Caco-2 (cell line): ENCODE measurements at regions of chr1 and their contacts with region 1.

Region 1: DNA sequence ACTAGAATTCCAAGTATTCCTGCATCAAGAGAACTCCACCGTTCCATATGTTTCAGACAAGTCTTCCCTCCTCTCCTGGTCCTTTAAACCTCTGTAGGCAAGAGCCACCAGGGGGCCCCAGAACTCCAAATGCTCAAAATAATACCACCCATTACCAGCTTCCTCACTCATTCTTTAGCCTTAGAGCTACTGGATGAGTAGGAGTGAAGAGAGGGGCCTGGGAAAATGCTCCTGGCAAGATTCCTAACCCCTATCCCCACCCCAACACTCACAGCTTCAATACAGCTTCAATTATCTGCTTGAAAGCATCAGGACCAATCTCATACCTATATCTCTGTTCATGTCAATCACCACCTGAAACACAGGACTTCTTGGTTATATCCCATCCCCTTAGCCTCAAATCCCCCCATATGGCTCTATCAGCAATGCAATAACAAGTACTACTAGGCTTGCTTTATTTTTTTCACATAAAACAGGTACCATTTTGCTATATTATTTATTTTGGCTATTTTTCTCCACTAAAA is 9.7 kb downstream of the TOR1AIP2 start:
- DNase-seq: peak; percentile 61 to 69
- H3K4me3 ChIP-seq: no peak overlapping the region
- H3K4me3 Mint-ChIP-seq: no peak overlapping the region
- H3K27ac Mint-ChIP-seq: no peak overlapping the region
- H3K4me1 ChIP-seq: peaks cover 4% of the 10 kb centered on the region
- H3K4me1 Mint-ChIP-seq: peaks cover 11% of the 10 kb centered on the region
- H3K27me3 ChIP-seq: no peaks in the 10 kb centered on the region
- H3K27me3 Mint-ChIP-seq: no peaks in the 10 kb centered on the region
- CTCF ChIP-seq: peak; percentile 77 to 83

Region 2: GRCh38 chr1:179807731-179808485 is 60.0 kb before region 1 on chr1:
- CTCF ChIA-PET with region 1: no interaction called
- POLR2A ChIA-PET with region 1: no interaction called
- intact Hi-C with region 1: no loop called
- DNase-seq: peak; percentile 57 to 73
- H3K4me3 ChIP-seq: no peak overlapping the region
- H3K4me3 Mint-ChIP-seq: no peak overlapping the region
- H3K27ac Mint-ChIP-seq: peak overlapping the region; percentile 58
- H3K4me1 ChIP-seq: peaks cover 34% of the 10 kb centered on the region
- H3K4me1 Mint-ChIP-seq: peaks cover 10% of the 10 kb centered on the region
- H3K27me3 ChIP-seq: no peaks in the 10 kb centered on the region
- H3K27me3 Mint-ChIP-seq: peaks cover 14% of the 10 kb centered on the region
- CTCF ChIP-seq: no peak

Region 3: DNA sequence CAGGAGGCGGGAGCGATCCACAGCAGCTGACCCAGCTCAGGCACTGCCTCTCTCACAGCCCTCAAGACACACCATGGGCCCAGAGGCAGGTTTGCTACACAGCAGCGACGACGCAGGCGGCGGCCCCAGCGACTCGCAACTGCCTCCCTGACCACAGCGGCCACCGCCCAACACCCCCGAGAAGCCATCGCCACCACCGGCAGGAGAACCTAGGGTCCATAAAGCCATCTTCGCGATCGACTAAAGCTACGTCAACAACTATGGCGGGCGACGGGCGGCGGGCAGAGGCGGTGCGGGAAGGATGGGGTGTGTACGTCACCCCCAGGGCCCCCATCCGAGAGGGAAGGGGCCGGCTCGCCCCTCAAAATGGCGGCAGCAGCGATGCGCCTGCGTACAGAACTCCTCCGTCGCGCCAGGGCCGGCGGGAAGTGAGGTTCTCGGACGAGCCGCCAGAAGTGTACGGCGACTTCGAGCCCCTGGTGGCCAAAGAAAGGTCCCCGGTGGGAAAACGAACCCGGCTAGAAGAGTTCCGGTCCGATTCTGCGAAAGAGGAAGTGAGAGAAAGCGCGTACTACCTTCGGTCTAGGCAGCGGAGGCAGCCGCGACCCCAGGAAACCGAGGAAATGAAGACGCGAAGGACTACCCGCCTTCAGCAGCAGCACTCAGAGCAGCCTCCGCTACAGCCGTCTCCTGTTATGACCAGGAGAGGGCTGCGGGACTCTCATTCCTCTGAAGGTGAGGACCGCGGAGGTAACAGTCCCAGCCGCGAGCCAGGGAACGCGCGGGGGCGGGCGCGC is 14.6 kb after region 1 on chr1 and contains the start of gene TOR1AIP1:
- CTCF ChIA-PET with region 1: interaction called, 12 read pairs
- POLR2A ChIA-PET with region 1: no interaction called
- intact Hi-C with region 1: no loop called
- DNase-seq: peak; percentile 97
- H3K4me3 ChIP-seq: peak within 1 kb of the TSS; percentile 65
- H3K4me3 Mint-ChIP-seq: peak within 1 kb of the TSS; percentile 95
- H3K27ac Mint-ChIP-seq: peak within 1 kb of the TSS; percentile 100
- H3K4me1 ChIP-seq: peaks cover 10% of the 10 kb centered on the region
- H3K4me1 Mint-ChIP-seq: peaks cover 19% of the 10 kb centered on the region
- H3K27me3 ChIP-seq: no peaks in the 10 kb centered on the region
- H3K27me3 Mint-ChIP-seq: no peaks in the 10 kb centered on the region
- CTCF ChIP-seq: peak; percentile 17 to 60
- total RNA-seq, gene TOR1AIP1: 25.4 and 30.3 TPM in 2 replicates

Region 4: GRCh38 chr1:179954493-179955297 is 86.8 kb after region 1 on chr1 and contains the start of gene CEP350:
- CTCF ChIA-PET with region 1: interaction called, 4 read pairs
- POLR2A ChIA-PET with region 1: no interaction called
- intact Hi-C with region 1: loop called (anchors 1 kb)
- DNase-seq: peak; percentile 98 to 99
- H3K4me3 ChIP-seq: peak within 1 kb of the TSS; percentile 73
- H3K4me3 Mint-ChIP-seq: peak within 1 kb of the TSS; percentile 83
- H3K27ac Mint-ChIP-seq: peak within 1 kb of the TSS; percentile 30
- H3K4me1 ChIP-seq: 0 out of 2 replicates have a peak, but pooled peaks cover 8% of the 10 kb centered on the region
- H3K4me1 Mint-ChIP-seq: peaks cover 14% of the 10 kb centered on the region
- H3K27me3 ChIP-seq: no peaks in the 10 kb centered on the region
- H3K27me3 Mint-ChIP-seq: no peaks in the 10 kb centered on the region
- CTCF ChIP-seq: no peak
- total RNA-seq, gene CEP350: 40.3 and 43.5 TPM in 2 replicates

Region 5: DNA sequence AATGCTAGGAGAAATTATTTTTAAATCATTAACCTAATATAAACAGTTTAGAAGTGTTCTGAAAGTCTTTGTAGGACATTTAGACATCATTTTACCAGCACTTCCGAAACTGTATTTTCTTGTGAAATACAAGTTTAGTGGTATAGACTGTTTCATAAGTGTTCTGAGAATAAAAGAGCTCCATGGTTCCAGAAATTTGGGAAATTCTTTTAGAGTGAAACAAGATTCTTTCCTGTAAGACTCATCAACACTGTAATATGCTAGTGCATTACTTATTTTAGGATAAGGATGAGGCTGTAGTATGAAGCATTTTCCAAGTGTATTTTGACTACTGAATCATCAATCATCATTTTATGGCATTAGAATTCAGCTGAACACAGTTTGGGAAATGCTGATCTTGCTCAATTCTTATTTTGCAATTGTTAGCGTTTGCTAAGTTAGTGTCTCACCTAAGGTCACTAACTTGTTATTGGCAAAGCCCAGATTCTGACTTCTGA is 160.1 kb after region 1 on chr1:
- CTCF ChIA-PET with region 1: no interaction called
- POLR2A ChIA-PET with region 1: no interaction called
- intact Hi-C with region 1: loop called (anchors 10 kb)
- DNase-seq: no peak
- H3K4me3 ChIP-seq: no peak overlapping the region
- H3K4me3 Mint-ChIP-seq: no peak overlapping the region
- H3K27ac Mint-ChIP-seq: no peak overlapping the region
- H3K4me1 ChIP-seq: no peaks in the 10 kb centered on the region
- H3K4me1 Mint-ChIP-seq: no peaks in the 10 kb centered on the region
- H3K27me3 ChIP-seq: no peaks in the 10 kb centered on the region
- H3K27me3 Mint-ChIP-seq: no peaks in the 10 kb centered on the region
- CTCF ChIP-seq: no peak

Region 6: DNA sequence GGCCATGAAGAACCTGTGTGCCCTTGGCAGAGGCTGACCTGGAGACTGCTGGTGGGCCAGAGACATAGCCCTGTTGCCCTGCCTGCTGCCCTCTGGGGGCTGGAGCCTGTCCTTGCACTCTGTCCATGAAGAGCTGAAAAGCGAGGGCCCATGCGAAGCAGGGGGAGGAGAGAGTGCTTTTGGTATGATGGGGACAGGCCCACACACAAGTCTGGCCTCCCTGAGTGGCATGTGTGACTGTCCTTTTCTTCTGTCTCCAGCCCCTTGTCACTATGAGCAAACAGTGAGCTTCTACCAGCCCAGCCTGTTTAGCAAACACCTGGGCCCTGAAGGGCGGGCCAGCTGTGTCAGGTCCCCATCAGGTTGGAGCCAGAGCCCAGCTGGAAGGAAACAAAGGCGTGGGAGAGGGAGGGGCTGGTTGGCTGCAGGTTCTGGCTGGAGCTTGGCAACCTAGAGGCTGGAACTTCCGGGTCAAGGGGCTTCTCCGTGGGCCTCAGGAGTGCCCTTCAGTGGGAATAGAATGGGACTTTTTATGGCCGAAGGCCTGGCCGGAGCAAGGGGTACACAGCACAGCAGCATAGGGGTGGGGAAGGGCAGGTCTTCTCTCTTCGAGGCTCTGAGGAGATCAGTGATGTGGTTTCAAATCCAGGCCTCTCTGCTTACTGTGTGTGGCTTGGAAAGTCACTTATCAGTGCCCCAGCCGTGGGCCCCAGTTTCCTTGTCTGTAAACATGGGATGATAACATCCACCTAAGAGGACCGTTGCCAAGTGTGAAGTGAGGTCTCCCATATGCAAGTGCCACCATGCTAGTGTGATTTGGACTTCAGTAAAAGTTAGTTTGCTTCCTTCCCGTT is 301.1 kb after region 1 on chr1:
- CTCF ChIA-PET with region 1: interaction called, 7 read pairs
- POLR2A ChIA-PET with region 1: no interaction called
- intact Hi-C with region 1: loop called (anchors 2 kb)
- DNase-seq: peak; percentile 72 to 81
- H3K4me3 ChIP-seq: no peak overlapping the region
- H3K4me3 Mint-ChIP-seq: no peak overlapping the region
- H3K27ac Mint-ChIP-seq: no peak overlapping the region
- H3K4me1 ChIP-seq: peaks cover 21% of the 10 kb centered on the region
- H3K4me1 Mint-ChIP-seq: peaks cover 8% of the 10 kb centered on the region
- H3K27me3 ChIP-seq: no peaks in the 10 kb centered on the region
- H3K27me3 Mint-ChIP-seq: no peaks in the 10 kb centered on the region
- CTCF ChIP-seq: peak; percentile 72 to 75

Region 7: DNA sequence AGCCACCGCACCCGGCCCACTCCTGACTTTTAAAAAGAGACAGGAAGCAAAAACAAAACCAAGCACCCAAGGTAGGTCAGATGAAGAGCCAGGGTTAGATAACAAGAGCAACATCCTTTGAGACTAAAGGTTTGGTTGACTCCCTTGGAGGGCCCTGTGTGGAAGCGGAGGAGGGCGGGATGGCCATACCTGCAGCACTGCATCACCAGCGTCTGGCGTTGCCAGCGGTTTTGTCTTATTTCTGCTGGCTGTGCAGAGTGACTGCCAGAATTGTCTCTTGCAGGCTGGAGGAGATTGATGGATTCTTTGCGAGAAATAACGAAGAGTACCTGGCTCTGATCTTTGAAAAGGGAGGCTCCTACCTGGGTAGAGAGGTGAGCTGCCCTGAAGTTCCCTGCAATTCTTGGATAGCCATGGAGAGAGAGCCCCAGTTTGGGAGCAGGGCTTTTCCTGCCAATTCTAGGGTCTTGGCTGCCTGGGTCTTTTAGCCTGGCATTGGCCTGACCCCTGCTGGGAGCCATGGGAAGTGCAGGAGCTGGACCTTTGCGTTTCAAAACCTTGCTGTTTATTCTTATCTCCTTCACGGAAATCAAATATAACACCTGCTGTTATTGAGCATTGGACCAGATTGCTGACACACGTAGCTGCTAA is 310.8 kb after region 1 on chr1:
- CTCF ChIA-PET with region 1: interaction called, 9 read pairs
- POLR2A ChIA-PET with region 1: no interaction called
- intact Hi-C with region 1: loop called (anchors 1 kb)
- DNase-seq: peak; percentile 64 to 80
- H3K4me3 ChIP-seq: no peak overlapping the region
- H3K4me3 Mint-ChIP-seq: no peak overlapping the region
- H3K27ac Mint-ChIP-seq: no peak overlapping the region
- H3K4me1 ChIP-seq: no peaks in the 10 kb centered on the region
- H3K4me1 Mint-ChIP-seq: no peaks in the 10 kb centered on the region
- H3K27me3 ChIP-seq: no peaks in the 10 kb centered on the region
- H3K27me3 Mint-ChIP-seq: no peaks in the 10 kb centered on the region
- CTCF ChIP-seq: peak; percentile 92 to 98